CD4-positive, alpha-beta memory T cell (primary cell): ENCODE measurements at regions of chr6 and their contacts with region 1.

Region 1: DNA sequence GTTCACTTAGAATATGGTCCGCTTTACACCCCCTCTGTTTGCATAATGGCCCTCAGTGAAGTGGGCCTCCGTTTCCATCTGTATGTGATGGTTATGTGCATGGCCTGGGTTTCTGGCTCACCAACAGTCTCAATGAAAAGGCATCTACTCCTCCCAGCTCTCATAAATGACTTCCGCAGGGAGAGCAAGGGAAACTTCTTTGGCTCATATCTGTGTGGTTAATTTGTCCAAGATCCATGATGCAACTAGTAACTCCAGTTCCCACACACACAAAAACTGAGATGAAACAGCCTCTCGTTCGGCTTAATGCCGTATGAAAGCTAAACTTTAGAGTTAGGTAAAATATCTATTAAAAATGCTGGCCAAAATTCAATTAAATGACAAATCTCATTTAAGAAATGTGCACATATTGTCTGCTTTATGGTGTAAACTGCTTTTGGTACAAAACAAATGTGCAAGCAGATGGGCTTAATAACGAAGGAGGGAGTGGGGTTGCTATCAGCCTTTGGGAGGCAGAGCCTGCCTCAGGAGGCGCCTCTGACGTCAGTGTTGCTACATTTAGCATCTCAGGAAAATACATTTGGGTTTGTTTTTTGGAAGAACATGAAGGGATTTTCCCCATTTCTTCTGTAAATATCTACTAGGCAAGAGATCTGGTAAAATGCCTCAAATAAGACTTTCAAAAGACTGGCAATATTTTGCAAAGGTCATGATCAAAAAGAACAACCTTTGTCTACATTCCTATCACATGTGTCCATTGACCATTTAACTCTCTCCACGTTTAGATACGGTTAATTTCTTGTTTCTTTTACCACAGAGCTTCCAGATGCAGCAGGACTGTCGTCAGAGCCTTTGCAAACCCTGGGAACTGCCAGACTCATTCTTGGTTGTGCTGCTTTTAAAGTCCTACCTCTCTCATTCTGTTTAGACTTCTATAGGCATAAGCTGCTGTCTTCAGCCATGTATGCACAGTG is 96.8 kb downstream of the ARMC2 start:
- DNase-seq: no peak
- H3K4me3 ChIP-seq: no peak overlapping the region
- H3K4me3 Mint-ChIP-seq: peak overlapping the region in 3 of 8 donors; percentile 3 to 40 (median 15)
- H3K27ac ChIP-seq: no peak overlapping the region
- H3K27ac Mint-ChIP-seq: peak overlapping the region in 5 of 7 donors; percentile 3 to 24 (median 7)
- H3K4me1 ChIP-seq: peaks cover 37% of the 10 kb centered on the region
- H3K4me1 Mint-ChIP-seq: peaks cover 22 to 66% (median 38%) of the 10 kb centered on the region in 4 donors
- H3K27me3 ChIP-seq: no peaks in the 10 kb centered on the region
- H3K27me3 Mint-ChIP-seq: no peaks in the 10 kb centered on the region

Region 2: GRCh38 chr6:108848116-108848868 is 96.7 kb before region 1 on chr6 and contains the start of gene ARMC2:
- CTCF ChIA-PET with region 1: no interaction called
- POLR2A ChIA-PET with region 1: no interaction called
- intact Hi-C with region 1: loop called (anchors 2 kb)
- DNase-seq: peak; percentile 85 to 88 (median 86)
- H3K4me3 ChIP-seq: peak within 1 kb of the TSS; percentile 46 to 78
- H3K4me3 Mint-ChIP-seq: peak within 1 kb of the TSS; percentile 84 to 91 (median 86)
- H3K27ac ChIP-seq: peak within 1 kb of the TSS; percentile 58
- H3K27ac Mint-ChIP-seq: peak within 1 kb of the TSS; percentile 81 to 93 (median 91)
- H3K4me1 ChIP-seq: peaks cover 15% of the 10 kb centered on the region
- H3K4me1 Mint-ChIP-seq: peaks cover 17 to 33% (median 23%) of the 10 kb centered on the region in 4 donors
- H3K27me3 ChIP-seq: no peaks in the 10 kb centered on the region
- H3K27me3 Mint-ChIP-seq: no peaks in the 10 kb centered on the region
- total RNA-seq, gene ARMC2: 10.7 to 11.2 TPM

Region 3: GRCh38 chr6:108904741-108905140 is 40.3 kb before region 1 on chr6:
- CTCF ChIA-PET with region 1: interaction called, 3 read pairs
- POLR2A ChIA-PET with region 1: interaction called, 3 read pairs
- intact Hi-C with region 1: loop called (anchors 5 kb)
- DNase-seq: no peak
- H3K4me3 ChIP-seq: no peak overlapping the region
- H3K4me3 Mint-ChIP-seq: no peak overlapping the region
- H3K27ac ChIP-seq: no peak overlapping the region
- H3K27ac Mint-ChIP-seq: peak overlapping the region in 2 of 7 donors; percentile 6 to 90
- H3K4me1 ChIP-seq: peaks cover 26% of the 10 kb centered on the region
- H3K4me1 Mint-ChIP-seq: peaks cover 22 to 35% (median 27%) of the 10 kb centered on the region in 4 donors
- H3K27me3 ChIP-seq: no peaks in the 10 kb centered on the region
- H3K27me3 Mint-ChIP-seq: no peaks in the 10 kb centered on the region

Region 4: DNA sequence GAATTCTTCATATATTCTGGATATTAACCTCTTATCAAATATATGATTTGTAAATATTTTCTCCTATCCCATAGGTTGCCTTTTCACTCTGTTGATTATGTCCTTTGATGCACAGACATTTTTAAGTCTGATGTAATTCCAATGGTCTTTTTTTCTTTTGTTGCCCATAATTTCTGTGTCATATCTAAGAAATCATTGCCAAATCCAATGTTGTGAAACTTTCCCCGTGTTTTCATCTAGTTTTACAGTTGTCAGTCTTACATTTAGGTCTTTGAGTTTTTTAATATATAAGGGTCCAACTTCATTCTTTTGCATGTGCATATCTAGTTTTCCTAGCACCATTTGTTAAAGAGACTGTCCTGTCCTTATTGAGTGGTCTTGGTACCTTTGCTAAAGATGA is 38.2 kb after region 1 on chr6:
- CTCF ChIA-PET with region 1: interaction called, 3 read pairs
- POLR2A ChIA-PET with region 1: no interaction called
- intact Hi-C with region 1: loop called (anchors 5 kb)
- DNase-seq: no peak
- H3K4me3 ChIP-seq: no peak overlapping the region
- H3K4me3 Mint-ChIP-seq: no peak overlapping the region
- H3K27ac ChIP-seq: no peak overlapping the region
- H3K27ac Mint-ChIP-seq: peak overlapping the region in 2 of 7 donors; percentile 7 to 15
- H3K4me1 ChIP-seq: no peaks in the 10 kb centered on the region
- H3K4me1 Mint-ChIP-seq: peaks cover 0 to 2% (median under 1%) of the 10 kb centered on the region in 4 donors
- H3K27me3 ChIP-seq: no peaks in the 10 kb centered on the region
- H3K27me3 Mint-ChIP-seq: no peaks in the 10 kb centered on the region

Region 5: GRCh38 chr6:109002051-109002697 is 57.2 kb after region 1 on chr6:
- CTCF ChIA-PET with region 1: no interaction called
- POLR2A ChIA-PET with region 1: no interaction called
- intact Hi-C with region 1: no loop called
- DNase-seq: no peak
- H3K4me3 ChIP-seq: no peak overlapping the region
- H3K4me3 Mint-ChIP-seq: peak overlapping the region in 2 of 8 donors; percentile 26 to 36
- H3K27ac ChIP-seq: no peak overlapping the region
- H3K27ac Mint-ChIP-seq: peak overlapping the region in 3 of 7 donors; percentile 19 to 58 (median 41)
- H3K4me1 ChIP-seq: peaks cover 37% of the 10 kb centered on the region
- H3K4me1 Mint-ChIP-seq: peaks cover 35 to 57% (median 46%) of the 10 kb centered on the region in 4 donors
- H3K27me3 ChIP-seq: no peaks in the 10 kb centered on the region
- H3K27me3 Mint-ChIP-seq: no peaks in the 10 kb centered on the region